PC-9 (cell line): ENCODE measurements at regions of chr1 and their contacts with region 1.

Region 1: GRCh38 chr1:235971571-235972310 is 93.1 kb downstream of the NID1 start:
- DNase-seq: peak; percentile 71 to 92
- H3K4me3 ChIP-seq: no peak overlapping the region; the same call in 1 of the 2 replicates
- H3K27ac ChIP-seq: no peak overlapping the region
- H3K4me1 ChIP-seq: peaks cover 13% of the 10 kb centered on the region; the same call in 1 of the 2 replicates
- H3K27me3 ChIP-seq: no peaks in the 10 kb centered on the region
- CTCF ChIP-seq: peak; percentile 92

Region 2: DNA sequence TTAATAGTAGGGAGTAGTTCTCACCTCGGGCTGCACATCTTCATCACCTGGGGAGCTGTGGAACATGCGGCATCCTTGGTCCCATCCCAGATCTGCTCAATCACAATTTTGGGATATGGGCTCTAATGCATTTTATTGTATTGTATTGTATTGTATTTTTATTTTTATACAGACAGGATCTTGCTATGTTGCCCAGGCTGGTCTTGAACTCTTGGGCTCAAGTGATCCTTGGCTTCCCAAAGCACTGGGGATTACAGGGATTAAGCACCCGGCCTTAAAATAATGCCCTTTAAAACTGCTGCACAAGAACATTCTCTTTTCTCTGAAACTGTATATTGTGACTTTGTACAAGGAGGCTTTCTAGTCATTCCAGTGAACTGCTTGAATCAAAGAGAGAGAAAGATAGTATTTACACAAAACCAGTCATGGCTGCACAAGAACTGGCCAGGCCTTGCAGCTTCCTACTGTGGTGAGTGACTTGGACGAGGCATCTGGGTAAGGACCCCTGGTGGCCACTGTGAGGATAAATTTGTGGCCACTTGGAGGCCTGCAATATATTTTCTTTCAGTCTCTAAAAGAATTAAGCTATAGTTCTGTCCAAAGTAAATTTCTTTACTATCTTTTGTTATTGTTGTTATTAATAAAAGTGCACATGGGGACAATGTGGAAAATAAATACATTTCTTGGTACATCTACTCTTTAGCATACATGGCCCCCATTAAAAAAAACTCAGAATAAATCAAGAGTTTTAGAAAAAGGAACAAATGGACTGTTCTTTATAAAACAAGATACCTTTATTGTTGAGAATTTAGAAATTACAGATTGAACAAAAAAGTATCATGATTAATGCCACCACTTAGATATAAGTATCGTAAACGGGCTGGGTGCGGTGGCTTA is 556.5 kb before region 1 on chr1:
- CTCF ChIA-PET with region 1: no interaction called
- POLR2A ChIA-PET with region 1: interaction called, 3 read pairs
- intact Hi-C with region 1: loop called (anchors 5 kb)
- DNase-seq: peak; percentile 68 to 69
- H3K4me3 ChIP-seq: no peak overlapping the region
- H3K27ac ChIP-seq: no peak overlapping the region
- H3K4me1 ChIP-seq: 0 out of 2 replicates have a peak, but pooled peaks cover 5% of the 10 kb centered on the region
- H3K27me3 ChIP-seq: no peaks in the 10 kb centered on the region
- CTCF ChIP-seq: peak; percentile 89

Region 3: DNA sequence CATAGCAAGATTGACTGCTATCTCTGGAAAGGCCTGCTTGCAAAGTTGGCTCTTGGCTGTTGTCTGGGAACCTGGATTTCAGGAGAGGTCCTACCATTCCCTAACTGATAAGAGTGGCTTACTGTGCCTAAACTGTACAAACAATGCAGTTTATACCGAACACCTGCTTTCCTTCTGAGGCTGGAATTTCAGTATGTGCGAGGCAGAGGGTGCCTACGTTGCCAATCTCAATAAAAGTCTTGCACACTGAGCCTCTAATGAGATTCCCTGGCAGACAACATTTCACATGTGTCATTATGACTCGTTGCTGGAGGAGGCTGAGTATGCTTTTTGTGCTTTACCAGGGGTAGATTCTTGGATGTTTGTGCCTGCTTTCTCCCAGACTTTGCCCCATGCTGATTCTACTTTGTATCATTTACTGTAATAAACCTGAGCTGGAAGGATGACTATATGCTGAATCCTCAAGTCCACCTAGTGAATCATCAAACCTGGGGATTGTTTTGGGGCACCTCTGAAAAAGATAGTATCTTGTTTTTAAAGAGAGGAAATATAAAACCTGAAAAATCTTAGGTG is 263.3 kb before region 1 on chr1:
- CTCF ChIA-PET with region 1: no interaction called
- POLR2A ChIA-PET with region 1: interaction called, 11 read pairs
- intact Hi-C with region 1: no loop called
- DNase-seq: peak; percentile 58 to 82
- H3K4me3 ChIP-seq: no peak overlapping the region
- H3K27ac ChIP-seq: peak overlapping the region; percentile 88
- H3K4me1 ChIP-seq: peaks cover 54% of the 10 kb centered on the region
- H3K27me3 ChIP-seq: no peaks in the 10 kb centered on the region
- CTCF ChIP-seq: no peak

Region 4: GRCh38 chr1:235775246-235775860 is 196.4 kb before region 1 on chr1:
- CTCF ChIA-PET with region 1: no interaction called
- POLR2A ChIA-PET with region 1: no interaction called
- intact Hi-C with region 1: no loop called
- DNase-seq: no peak
- H3K4me3 ChIP-seq: no peak overlapping the region
- H3K27ac ChIP-seq: no peak overlapping the region
- H3K4me1 ChIP-seq: no peaks in the 10 kb centered on the region
- H3K27me3 ChIP-seq: no peaks in the 10 kb centered on the region
- CTCF ChIP-seq: no peak

Region 5: DNA sequence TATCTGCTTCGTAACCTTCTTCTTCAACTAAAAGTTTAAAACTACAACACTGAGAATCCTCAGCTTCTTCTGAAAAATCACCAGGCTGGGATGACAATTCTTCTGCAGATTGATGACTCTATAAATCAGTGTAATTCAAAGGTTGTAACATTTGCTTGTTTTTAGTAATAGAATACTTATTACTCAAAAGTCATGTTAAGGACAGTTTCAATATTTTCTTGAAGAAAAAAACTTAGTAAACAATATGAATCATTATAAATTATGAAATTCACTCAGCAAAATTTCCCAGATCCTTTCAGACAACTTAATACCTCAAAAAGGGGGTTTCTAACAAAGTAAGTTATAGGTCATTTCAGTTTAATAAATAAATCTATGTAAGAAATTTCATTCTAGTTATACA is 168.8 kb before region 1 on chr1:
- CTCF ChIA-PET with region 1: interaction called, 12 read pairs
- POLR2A ChIA-PET with region 1: no interaction called
- intact Hi-C with region 1: no loop called
- DNase-seq: no peak
- H3K4me3 ChIP-seq: no peak overlapping the region
- H3K27ac ChIP-seq: no peak overlapping the region
- H3K4me1 ChIP-seq: no peaks in the 10 kb centered on the region
- H3K27me3 ChIP-seq: no peaks in the 10 kb centered on the region
- CTCF ChIP-seq: no peak

Region 6: DNA sequence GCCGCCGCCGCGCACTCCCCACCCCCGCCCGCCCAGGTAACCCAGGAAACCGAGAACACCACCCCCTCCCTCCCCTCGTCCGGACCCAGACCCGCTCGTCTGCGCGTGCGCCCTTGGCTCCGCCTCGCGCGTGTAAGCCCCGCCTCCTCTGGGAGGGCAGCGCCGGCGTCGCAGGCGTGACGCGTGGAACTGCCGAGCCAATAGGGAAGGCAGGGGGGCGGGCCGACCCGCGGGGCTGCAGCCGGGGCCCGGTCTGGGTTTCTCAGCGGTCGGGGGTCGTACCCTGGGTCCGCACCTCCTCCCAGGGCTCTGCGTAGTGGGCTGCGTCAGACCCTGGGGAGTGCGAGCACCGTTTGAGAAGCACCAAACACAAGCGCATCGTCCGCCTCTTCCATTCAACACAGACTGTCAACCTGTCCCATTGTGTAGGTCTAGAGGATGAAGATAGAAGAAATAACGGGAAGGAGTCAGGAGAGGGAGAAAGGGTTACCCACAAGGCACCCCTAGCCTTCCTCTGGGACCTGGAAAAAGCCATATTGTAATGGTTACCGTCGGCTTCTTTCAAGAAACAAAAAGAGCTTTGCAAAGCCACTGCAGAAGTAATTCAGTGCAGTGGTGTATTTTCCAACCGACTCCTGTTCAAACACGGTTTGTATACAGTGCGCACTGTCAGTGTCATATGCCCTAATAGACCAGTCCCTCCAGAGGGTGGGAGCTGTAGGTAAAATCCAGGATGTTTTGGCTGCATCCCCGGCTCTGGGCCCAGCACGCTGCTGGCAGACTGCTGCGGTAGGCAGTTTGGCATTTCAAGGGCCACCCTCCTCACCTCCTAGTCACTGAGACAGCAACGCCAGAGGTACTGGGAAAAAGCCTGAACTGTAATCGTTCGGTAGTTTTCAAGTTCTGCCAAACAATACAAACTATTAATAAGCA is 104.6 kb before region 1 on chr1:
- CTCF ChIA-PET with region 1: interaction called, 22 read pairs
- POLR2A ChIA-PET with region 1: interaction called, 3 read pairs
- intact Hi-C with region 1: loop called (anchors 1 kb)
- DNase-seq: peak; percentile 77 to 99
- H3K4me3 ChIP-seq: peak overlapping the region; percentile 88
- H3K27ac ChIP-seq: peak overlapping the region; percentile 6; the same call in 1 of the 2 replicates
- H3K4me1 ChIP-seq: peaks cover 19% of the 10 kb centered on the region
- H3K27me3 ChIP-seq: no peaks in the 10 kb centered on the region
- CTCF ChIP-seq: no peak

Region 7: GRCh38 chr1:235933017-235933765 is 38.5 kb before region 1 on chr1:
- CTCF ChIA-PET with region 1: interaction called, 17 read pairs
- POLR2A ChIA-PET with region 1: no interaction called
- intact Hi-C with region 1: loop called (anchors 1 kb)
- DNase-seq: no peak
- H3K4me3 ChIP-seq: no peak overlapping the region
- H3K27ac ChIP-seq: peak overlapping the region; percentile 61; the same call in 1 of the 2 replicates
- H3K4me1 ChIP-seq: peaks cover 42% of the 10 kb centered on the region
- H3K27me3 ChIP-seq: no peaks in the 10 kb centered on the region
- CTCF ChIP-seq: no peak

Region 8: GRCh38 chr1:235990376-235991085 is 18.8 kb after region 1 on chr1:
- CTCF ChIA-PET with region 1: no interaction called
- POLR2A ChIA-PET with region 1: no interaction called
- intact Hi-C with region 1: no loop called
- DNase-seq: no peak
- H3K4me3 ChIP-seq: no peak overlapping the region
- H3K27ac ChIP-seq: no peak overlapping the region
- H3K4me1 ChIP-seq: no peaks in the 10 kb centered on the region
- H3K27me3 ChIP-seq: no peaks in the 10 kb centered on the region
- CTCF ChIP-seq: no peak

Region 9: GRCh38 chr1:236090741-236091147 is 119.0 kb after region 1 on chr1:
- CTCF ChIA-PET with region 1: no interaction called
- POLR2A ChIA-PET with region 1: no interaction called
- intact Hi-C with region 1: loop called (anchors 5 kb)
- DNase-seq: no peak
- H3K4me3 ChIP-seq: no peak overlapping the region
- H3K27ac ChIP-seq: no peak overlapping the region
- H3K4me1 ChIP-seq: no peaks in the 10 kb centered on the region
- H3K27me3 ChIP-seq: no peaks in the 10 kb centered on the region
- CTCF ChIP-seq: no peak